ENCODE measurements at regions of chr4 and their contacts with region 1.

Region 1: GRCh38 chr4:82462415-82462831 is 32.0 kb downstream of the ENOPH1 start:
- DNase-seq: peak; percentile 71
- CTCF ChIP-seq: peak; percentile 85

Region 2: DNA sequence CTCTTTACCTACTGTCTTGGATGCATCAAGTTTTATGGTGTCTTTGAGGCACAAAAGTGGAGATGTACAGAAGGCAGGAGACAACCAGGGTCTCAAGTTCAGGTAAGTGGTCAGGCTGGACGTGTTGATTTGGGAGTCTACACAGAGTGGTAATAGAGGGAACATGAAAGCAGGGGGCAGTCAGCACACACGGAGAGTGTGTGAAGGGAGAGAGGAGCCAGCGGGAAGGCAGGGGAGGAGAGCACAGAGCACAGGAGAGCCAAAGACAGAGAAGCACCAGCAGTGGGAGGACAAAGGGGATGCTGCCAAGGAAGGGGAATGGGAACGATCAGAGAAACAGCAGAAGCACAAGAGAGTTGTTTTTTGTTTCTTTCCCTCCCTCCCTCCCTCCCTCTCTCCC is 66.4 kb after region 1 on chr4:
- in situ Hi-C with region 1: no loop called
- DNase-seq: no peak
- CTCF ChIP-seq: no peak

Region 3: GRCh38 chr4:82652062-82652461 is 189.6 kb after region 1 on chr4:
- in situ Hi-C with region 1: no loop called
- DNase-seq: no peak
- CTCF ChIP-seq: no peak

Region 4: GRCh38 chr4:82753725-82754410 is 291.4 kb after region 1 on chr4:
- in situ Hi-C with region 1: loop called (anchors 10 kb)
- DNase-seq: no peak
- CTCF ChIP-seq: no peak

Region 5: DNA sequence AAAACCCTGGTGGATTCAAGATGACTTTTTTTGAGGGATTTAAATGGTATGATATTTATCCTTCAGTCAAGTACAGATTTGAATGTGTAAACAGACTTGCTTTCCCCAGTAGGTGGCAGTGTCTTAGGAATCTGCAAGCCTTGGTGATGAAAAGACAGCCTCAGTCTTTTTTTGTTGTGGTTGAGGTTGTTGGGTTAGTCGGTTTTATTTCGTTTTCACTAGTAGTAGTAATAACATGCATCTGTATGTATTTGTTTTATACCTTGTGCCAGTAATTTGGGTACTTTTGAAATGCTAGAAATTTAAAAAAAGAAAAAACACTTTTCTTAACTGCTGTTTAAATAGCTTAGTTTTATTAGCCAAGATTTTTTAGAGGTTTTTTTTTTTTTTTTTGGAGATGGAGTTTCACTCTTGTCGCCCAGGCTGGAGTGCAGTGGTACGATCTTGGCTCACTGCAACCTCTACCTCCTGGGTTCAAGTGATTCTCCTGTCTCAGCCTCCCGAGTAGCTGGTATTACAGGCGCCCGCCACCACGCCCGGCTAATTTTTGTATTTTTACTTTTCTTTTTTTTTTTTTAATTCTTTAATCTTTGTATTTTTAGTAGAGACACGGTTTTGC is 611.8 kb after region 1 on chr4:
- in situ Hi-C with region 1: loop called (anchors 25 kb)
- DNase-seq: peak; percentile 77
- CTCF ChIP-seq: peak; percentile 72

Region 6: DNA sequence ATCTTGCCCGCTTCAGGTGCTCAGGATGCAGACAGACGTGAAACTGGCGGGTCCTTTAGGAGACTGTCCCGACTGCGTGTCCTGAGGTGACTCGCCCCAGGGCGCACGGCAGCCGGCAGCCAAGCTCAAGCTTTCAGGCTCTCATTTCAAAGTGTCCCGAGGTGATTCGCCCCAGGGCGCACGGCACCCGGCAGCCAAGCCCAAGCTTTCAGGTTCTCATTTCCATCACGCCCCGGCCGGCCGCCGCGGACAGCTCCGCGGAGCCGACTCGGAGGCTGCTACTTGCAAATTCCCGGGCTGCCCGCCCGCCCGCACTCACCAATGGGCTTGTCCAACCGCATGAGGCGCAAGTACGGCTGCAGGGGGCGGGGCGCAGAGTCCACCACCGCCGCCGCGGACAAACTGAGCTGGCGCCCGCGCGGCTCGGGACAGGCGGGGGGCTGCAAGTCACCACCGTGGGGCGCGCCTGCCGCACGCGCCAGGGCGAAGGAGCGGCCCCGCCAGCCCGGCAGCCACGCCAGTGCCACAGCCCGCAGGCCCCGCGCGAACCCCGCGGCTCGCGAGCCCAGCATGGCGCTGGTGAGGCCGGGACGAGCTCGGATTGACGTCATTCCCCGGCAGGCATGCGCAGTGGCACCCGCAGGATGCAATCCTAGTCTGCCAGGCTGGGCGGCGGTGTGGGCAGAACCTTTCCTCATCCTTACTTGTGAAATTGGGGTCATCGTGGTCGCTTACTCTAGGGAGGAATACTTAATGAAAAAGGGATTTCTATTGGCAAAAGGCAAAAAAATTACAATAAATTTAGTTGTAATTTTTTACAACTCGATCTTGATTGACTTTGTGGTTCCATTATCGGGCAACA is 822.0 kb after region 1 on chr4 and contains the start of gene COQ2:
- in situ Hi-C with region 1: loop called (anchors 25 kb)
- DNase-seq: peak; percentile 93
- CTCF ChIP-seq: peak; percentile 12

Region 7: GRCh38 chr4:83348074-83348473 is 885.7 kb after region 1 on chr4:
- in situ Hi-C with region 1: no loop called
- DNase-seq: no peak
- CTCF ChIP-seq: no peak

Measured in GM13977 (cell line).